Gastrocnemius medialis (tissue), 4 donors: ENCODE measurements at regions of chr9 and their contacts with region 1.

Region 1: GRCh38 chr9:15277400-15278090 is 29.5 kb downstream of the TTC39B start:
- DNase-seq: no peak
- ATAC-seq: peak in 1 of 2 donors; percentile 61
- H3K4me3 ChIP-seq: no peak overlapping the region
- H3K27ac ChIP-seq: no peak overlapping the region
- H3K4me1 ChIP-seq: peaks cover 4 to 7% of the 10 kb centered on the region in 2 donors
- H3K27me3 ChIP-seq: no peaks in the 10 kb centered on the region
- CTCF ChIP-seq: peak in 3 of 5 experiments; percentile 19 to 37 (median 27)
- POLR2A ChIP-seq: no peak

Region 2: GRCh38 chr9:15032860-15033259 is 244.7 kb before region 1 on chr9:
- in situ Hi-C with region 1: no loop called
- intact Hi-C with region 1: no loop called
- DNase-seq: no peak
- ATAC-seq: no peak
- H3K4me3 ChIP-seq: no peak overlapping the region
- H3K27ac ChIP-seq: no peak overlapping the region
- H3K4me1 ChIP-seq: no peaks in the 10 kb centered on the region
- H3K27me3 ChIP-seq: no peaks in the 10 kb centered on the region
- CTCF ChIP-seq: no peak
- POLR2A ChIP-seq: no peak

Region 3: GRCh38 chr9:15068261-15068660 is 209.3 kb before region 1 on chr9:
- in situ Hi-C with region 1: no loop called
- intact Hi-C with region 1: no loop called
- DNase-seq: no peak
- ATAC-seq: no peak
- H3K4me3 ChIP-seq: no peak overlapping the region
- H3K27ac ChIP-seq: no peak overlapping the region
- H3K4me1 ChIP-seq: no peaks in the 10 kb centered on the region
- H3K27me3 ChIP-seq: no peaks in the 10 kb centered on the region
- CTCF ChIP-seq: no peak
- POLR2A ChIP-seq: no peak

Region 4: DNA sequence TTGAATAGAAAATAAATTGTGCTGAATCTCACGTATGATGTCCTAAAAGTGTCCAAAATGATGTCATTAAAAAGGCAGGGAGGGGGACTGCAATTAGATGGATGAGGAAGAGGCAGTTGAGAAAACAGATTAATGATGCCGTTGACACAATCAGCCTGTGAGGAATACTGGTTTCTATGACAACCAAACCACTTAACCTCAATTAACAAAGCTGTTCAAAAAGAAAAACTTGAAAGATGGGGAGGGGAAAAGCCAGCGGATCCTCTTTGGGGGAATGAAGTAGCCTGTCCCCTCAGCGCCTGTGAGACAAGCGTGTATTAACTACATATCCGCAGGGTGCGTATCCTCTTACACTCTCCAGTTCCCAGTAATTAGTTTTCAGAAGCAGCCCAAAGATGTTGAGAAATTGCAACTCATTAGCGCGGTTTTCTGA is 131.3 kb before region 1 on chr9:
- in situ Hi-C with region 1: no loop called
- intact Hi-C with region 1: no loop called
- DNase-seq: no peak
- ATAC-seq: no peak
- H3K4me3 ChIP-seq: no peak overlapping the region
- H3K27ac ChIP-seq: no peak overlapping the region
- H3K4me1 ChIP-seq: peaks cover 5 to 9% of the 10 kb centered on the region in 2 donors
- H3K27me3 ChIP-seq: no peaks in the 10 kb centered on the region
- CTCF ChIP-seq: no peak
- POLR2A ChIP-seq: no peak

Region 5: DNA sequence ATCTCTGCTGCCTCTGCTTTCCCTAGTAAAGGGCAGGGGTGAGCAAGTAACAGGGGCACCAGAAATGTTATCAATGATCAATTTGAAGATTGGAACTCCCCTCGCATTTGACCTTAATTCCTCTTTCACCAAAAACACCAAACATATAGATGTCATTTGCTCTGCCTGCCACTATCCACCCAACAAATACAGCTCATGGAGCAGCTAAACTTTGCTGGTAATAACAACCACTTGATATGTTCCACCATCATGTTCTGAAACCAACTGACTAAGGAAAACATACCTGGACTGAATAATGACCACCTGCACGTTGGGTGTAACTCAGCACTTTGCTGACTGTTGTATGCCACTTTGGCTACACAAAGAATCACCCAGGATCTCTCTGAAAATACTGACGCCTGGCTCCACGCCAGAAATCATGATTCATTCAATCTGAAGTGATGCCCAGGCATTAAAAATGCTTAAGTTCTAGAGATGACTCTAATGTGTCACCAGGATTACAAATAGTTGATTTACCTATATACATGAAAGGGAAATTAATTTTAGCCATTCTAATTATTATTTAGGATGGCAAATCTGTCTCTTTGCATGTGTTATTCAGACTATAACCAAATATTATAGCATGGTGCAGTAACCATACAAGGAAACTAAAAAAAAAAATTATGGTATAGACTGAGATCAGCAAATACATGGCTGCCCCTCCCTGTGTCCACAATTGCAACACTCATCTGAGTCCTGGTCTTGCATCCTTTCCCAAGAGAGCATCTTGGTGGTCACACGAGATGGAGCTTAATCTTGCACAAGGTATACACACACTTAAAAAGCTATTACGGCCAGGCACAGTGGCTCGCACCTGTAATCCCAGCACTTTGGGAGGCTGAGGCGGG is 72.6 kb after region 1 on chr9:
- in situ Hi-C with region 1: no loop called
- intact Hi-C with region 1: loop called (anchors 10 kb)
- DNase-seq: no peak
- ATAC-seq: no peak
- H3K4me3 ChIP-seq: no peak overlapping the region
- H3K27ac ChIP-seq: no peak overlapping the region
- H3K4me1 ChIP-seq: no peaks in the 10 kb centered on the region
- H3K27me3 ChIP-seq: no peaks in the 10 kb centered on the region
- CTCF ChIP-seq: no peak
- POLR2A ChIP-seq: no peak

Region 6: GRCh38 chr9:15430920-15431844 is 153.6 kb after region 1 on chr9:
- in situ Hi-C with region 1: no loop called
- intact Hi-C with region 1: no loop called
- DNase-seq: no peak
- ATAC-seq: no peak
- H3K4me3 ChIP-seq: no peak overlapping the region
- H3K27ac ChIP-seq: no peak overlapping the region
- H3K4me1 ChIP-seq: no peaks in the 10 kb centered on the region
- H3K27me3 ChIP-seq: no peaks in the 10 kb centered on the region
- CTCF ChIP-seq: no peak
- POLR2A ChIP-seq: no peak

Region 7: DNA sequence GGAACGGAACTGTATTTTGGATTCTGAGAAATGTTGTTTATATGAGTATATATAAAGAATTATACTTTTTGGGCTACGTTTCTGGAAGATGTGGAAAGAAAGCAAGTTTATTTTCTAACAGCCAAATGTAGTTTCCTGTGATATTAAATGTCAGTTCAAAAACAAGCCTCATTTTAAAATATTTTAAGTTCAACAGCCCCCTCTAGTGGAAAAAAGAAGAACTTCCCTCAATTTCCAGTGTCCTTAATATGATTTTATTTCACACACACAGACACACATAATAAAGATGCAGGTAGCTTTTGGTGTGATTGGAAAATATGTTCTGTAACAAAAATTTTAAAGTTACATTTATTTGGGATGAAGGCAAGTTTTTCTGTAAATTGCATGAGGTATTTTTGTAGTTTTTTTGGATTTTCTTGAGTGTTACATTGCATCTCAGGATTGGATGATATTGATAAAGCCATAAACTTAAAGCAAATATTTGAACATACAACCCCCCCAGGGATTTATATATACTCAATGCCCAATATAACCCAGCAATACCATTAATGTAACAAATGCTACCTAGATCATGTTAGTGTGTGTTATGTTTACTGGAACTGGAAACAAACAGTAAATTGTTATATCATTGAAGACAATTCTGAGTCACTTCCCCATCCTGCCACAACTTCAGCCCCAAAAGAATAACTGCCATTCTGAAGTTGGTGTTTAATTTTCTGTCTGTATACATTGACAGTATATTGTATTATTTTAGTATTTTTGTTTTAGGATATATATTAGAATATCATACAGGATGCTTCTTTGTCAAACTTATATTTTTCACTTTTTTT is 329.3 kb after region 1 on chr9:
- in situ Hi-C with region 1: loop called in 1 of 4 experiments (anchors 25 kb)
- intact Hi-C with region 1: loop called (anchors 2 kb)
- DNase-seq: no peak
- ATAC-seq: peak in 1 of 2 donors; percentile 42
- H3K4me3 ChIP-seq: no peak overlapping the region
- H3K27ac ChIP-seq: no peak overlapping the region
- H3K4me1 ChIP-seq: peaks cover 0 to 5% of the 10 kb centered on the region in 2 donors
- H3K27me3 ChIP-seq: no peaks in the 10 kb centered on the region
- CTCF ChIP-seq: peak; percentile 60 to 83 (median 62)
- POLR2A ChIP-seq: no peak